ENCODE measurements at regions of chrX and their contacts with region 1.

Region 1: DNA sequence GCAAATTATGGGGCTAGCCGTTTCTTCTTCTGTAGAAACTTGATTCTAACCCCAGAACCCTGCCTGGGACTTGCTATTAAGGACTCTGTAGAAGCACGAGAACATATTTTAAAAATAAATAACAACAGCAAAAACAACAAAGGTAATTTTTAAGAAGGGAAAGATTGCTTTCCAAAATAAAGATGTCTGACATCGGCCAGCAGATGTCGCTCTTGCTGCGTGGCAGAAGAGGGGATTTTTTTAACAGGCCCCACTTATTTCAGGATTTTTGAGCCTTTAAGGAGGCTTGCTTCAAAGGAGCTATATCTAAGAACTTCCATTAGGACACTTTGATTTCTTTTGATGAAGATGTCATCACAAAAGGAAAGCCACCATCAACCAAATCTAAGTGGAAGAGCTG is 62.8 kb upstream of the EGFL6 start:
- DNase-seq: peak; percentile 61
- H3K4me3 Mint-ChIP-seq: no peak overlapping the region
- H3K27ac Mint-ChIP-seq: no peak overlapping the region
- H3K4me1 Mint-ChIP-seq: peaks cover 9% of the 10 kb centered on the region
- H3K27me3 Mint-ChIP-seq: no peaks in the 10 kb centered on the region

Region 2: GRCh38 chrX:13646154-13646549 is 139.6 kb after region 1 on chrX:
- CTCF ChIA-PET with region 1: interaction called, 75 read pairs
- DNase-seq: peak; percentile 57
- H3K4me3 Mint-ChIP-seq: no peak overlapping the region
- H3K27ac Mint-ChIP-seq: no peak overlapping the region
- H3K4me1 Mint-ChIP-seq: peaks cover 6% of the 10 kb centered on the region
- H3K27me3 Mint-ChIP-seq: no peaks in the 10 kb centered on the region

Region 3: DNA sequence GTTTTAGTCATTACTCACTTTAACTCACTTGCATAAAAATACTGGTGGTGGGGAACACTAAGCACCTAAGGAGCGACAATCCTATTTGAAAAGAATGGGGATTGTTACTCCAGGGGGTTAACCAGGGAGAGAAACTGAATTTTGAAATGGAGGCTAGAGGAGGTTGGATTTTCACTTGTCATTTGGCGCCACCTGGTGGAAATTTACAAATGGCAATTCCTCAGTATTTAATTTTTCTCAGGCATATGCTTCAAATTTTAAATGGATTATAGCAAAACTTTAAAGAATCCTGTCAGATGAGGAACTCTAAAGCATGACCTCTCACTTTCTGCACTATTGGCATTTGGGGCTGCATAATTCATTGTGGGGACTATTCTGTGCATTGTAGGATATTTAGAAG is 525.8 kb after region 1 on chrX:
- CTCF ChIA-PET with region 1: interaction called, 21 read pairs
- DNase-seq: peak; percentile 62
- H3K4me3 Mint-ChIP-seq: no peak overlapping the region
- H3K27ac Mint-ChIP-seq: peak overlapping the region; percentile 52
- H3K4me1 Mint-ChIP-seq: peaks cover 42% of the 10 kb centered on the region
- H3K27me3 Mint-ChIP-seq: no peaks in the 10 kb centered on the region